Stomach (tissue), 19 donors: ENCODE measurements at regions of chr11 and their contacts with region 1.

Region 1: DNA sequence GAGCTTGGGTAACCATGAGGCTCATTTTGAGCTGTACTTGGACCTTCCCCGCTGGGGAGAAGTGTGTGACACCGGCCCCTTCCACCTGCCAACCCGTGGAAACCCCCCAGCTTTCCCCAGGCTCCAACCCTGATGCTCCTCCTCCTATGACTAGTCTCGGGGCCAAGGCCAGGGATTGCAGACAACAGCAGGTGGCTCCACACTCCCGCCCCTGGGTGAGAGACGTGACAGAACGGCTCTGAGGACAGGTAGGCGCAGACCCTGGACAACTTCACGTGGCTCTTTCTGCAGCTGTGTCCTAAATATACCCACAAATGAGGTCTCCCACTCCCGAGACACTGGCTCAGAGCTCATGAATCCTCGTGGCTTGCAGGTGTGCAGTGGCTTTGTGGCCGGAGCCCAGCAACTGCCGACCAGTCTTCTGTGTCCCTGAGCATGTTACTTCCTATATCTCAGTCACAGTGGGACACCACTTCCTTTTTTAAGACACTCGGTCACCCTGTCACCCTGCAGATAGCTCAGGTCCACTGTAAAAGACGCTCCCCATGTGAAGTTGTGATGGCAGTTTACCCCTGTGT is 55.2 kb downstream of the NECTIN1 start:
- DNase-seq: peak; percentile 30 to 69
- H3K4me3 ChIP-seq: no peak overlapping the region
- H3K27ac ChIP-seq: no peak overlapping the region
- H3K4me1 ChIP-seq: peaks cover 13 to 16% (median 15%) of the 10 kb centered on the region in 4 donors
- H3K27me3 ChIP-seq: no peaks in the 10 kb centered on the region
- CTCF ChIP-seq: no peak
- EP300 ChIP-seq: no peak
- POLR2A ChIP-seq: no peak

Region 2: DNA sequence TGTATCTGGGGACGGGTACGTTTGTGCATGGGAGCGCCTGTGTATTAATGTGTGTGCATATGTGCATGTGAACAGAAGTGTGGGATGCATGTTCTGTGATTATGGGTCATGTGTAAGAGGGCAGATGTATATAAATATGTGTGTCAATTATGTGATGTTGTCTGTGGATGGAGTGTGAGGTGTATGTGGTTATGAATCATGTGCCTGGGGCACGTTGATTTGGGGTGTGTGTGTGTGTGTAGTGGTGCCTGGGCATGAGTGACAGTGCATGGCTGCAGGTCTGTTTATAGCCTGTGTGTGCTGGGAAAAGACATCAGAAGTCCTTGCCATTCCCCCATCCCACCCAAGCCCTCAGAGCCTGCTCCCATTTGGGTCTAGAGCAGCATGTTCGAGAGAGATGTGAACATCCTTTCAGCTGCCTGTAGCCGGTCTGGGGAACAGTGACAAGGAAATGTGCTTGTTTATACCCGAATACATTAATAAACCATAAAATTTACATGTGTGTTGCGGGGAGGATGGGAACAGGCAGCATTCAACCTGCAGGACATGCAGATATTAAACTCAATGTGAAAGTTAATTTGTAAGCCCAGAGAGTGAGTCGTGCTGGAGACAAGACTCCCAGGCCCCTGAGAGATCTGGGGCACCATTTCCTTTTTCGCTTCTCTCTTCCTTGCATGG is 73.8 kb before region 1 on chr11:
- intact Hi-C with region 1: no loop called
- DNase-seq: no peak
- H3K4me3 ChIP-seq: no peak overlapping the region
- H3K27ac ChIP-seq: no peak overlapping the region
- H3K4me1 ChIP-seq: no peaks in the 10 kb centered on the region
- H3K27me3 ChIP-seq: peaks cover 0 to 26% (median 0%) of the 10 kb centered on the region in 3 donors
- CTCF ChIP-seq: no peak
- EP300 ChIP-seq: no peak
- POLR2A ChIP-seq: no peak

Region 3: GRCh38 chr11:119717839-119718534 is 44.1 kb after region 1 on chr11:
- intact Hi-C with region 1: loop called (anchors 5 kb)
- DNase-seq: no peak
- H3K4me3 ChIP-seq: no peak overlapping the region
- H3K27ac ChIP-seq: no peak overlapping the region
- H3K4me1 ChIP-seq: peaks cover 6 to 26% (median 12%) of the 10 kb centered on the region in 4 donors
- H3K27me3 ChIP-seq: no peaks in the 10 kb centered on the region
- CTCF ChIP-seq: no peak
- EP300 ChIP-seq: no peak
- POLR2A ChIP-seq: no peak